ENCODE measurements at regions of chr18 and their contacts with region 1.

Region 1: GRCh38 chr18:58671111-58671631 is at the start of gene MALT1:
- DNase-seq: peak; percentile 84 to 98 (median 94)
- ATAC-seq: peak; percentile 82 to 90 (median 87)
- H3K4me3 ChIP-seq: peak within 1 kb of the TSS; percentile 74 to 90
- H3K4me3 Mint-ChIP-seq: peak within 1 kb of the TSS; percentile 93 to 95 (median 93)
- H3K27ac ChIP-seq: peak within 1 kb of the TSS; percentile 57
- H3K27ac Mint-ChIP-seq: peak within 1 kb of the TSS; percentile 94 to 95
- H3K4me1 ChIP-seq: peaks cover 29 to 42% of the 10 kb centered on the region in 2 experiments
- H3K4me1 Mint-ChIP-seq: peaks cover 51 to 61% (median 55%) of the 10 kb centered on the region in 3 donors
- H3K27me3 ChIP-seq: no peaks in the 10 kb centered on the region
- H3K27me3 Mint-ChIP-seq: no peaks in the 10 kb centered on the region
- total RNA-seq, gene MALT1: 54.5 to 83.2 (median 69.5) TPM

Region 2: DNA sequence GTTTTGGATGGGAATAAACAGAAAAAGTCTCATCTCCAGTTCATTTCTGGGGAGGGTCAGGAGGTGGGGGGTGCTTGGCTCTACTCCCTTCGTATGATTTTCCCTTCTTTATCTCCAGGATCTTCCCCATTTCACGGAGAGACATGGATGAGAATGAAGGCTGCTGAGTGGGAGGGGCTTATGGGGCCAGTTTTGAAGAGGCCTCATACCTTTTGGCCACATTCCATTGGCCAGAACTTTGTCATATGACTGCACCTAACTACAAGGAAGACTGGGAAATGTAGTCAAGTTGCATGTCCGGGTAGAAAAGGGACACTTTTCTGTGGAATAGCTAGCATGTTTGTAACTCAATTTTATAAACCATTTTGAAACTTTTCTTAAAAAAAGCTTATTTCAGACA is 509.5 kb before region 1 on chr18:
- CTCF ChIA-PET with region 1: no interaction called
- POLR2A ChIA-PET with region 1: no interaction called
- DNase-seq: no peak
- ATAC-seq: no peak
- H3K4me3 ChIP-seq: no peak overlapping the region
- H3K4me3 Mint-ChIP-seq: no peak overlapping the region
- H3K27ac ChIP-seq: no peak overlapping the region
- H3K27ac Mint-ChIP-seq: no peak overlapping the region
- H3K4me1 ChIP-seq: no peaks in the 10 kb centered on the region
- H3K4me1 Mint-ChIP-seq: no peaks in the 10 kb centered on the region
- H3K27me3 ChIP-seq: no peaks in the 10 kb centered on the region
- H3K27me3 Mint-ChIP-seq: peaks cover 3 to 16% of the 10 kb centered on the region in 2 donors

Region 3: DNA sequence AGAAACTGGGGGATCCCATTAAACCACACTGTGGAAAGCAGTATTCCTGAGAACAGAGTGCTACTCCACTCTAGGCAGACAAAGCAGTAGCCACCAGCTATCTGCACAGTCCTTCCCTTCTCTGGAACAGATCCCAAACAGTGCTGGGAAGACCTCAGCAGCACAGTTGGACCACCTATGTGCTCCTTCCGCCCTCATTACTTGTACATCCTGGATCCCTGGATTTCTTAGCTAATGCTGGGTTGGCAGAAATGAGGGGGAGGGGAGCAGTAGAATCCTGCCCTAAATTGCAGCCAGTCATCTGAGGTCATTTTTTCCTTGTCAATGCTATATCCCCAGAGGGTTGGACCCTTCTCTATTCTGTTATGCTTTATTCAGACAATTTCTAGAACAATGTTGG is 13.7 kb before region 1 on chr18:
- CTCF ChIA-PET with region 1: interaction called in 1 of 2 experiments, 16 read pairs
- POLR2A ChIA-PET with region 1: interaction called, 6 to 19 read pairs
- DNase-seq: no peak
- ATAC-seq: no peak
- H3K4me3 ChIP-seq: no peak overlapping the region
- H3K4me3 Mint-ChIP-seq: peak overlapping the region; percentile 60 to 71 (median 67)
- H3K27ac ChIP-seq: peak overlapping the region; percentile 75
- H3K27ac Mint-ChIP-seq: peak overlapping the region; percentile 88 to 94
- H3K4me1 ChIP-seq: peaks cover 22 to 35% of the 10 kb centered on the region in 2 experiments
- H3K4me1 Mint-ChIP-seq: peaks cover 72 to 85% (median 73%) of the 10 kb centered on the region in 3 donors
- H3K27me3 ChIP-seq: no peaks in the 10 kb centered on the region
- H3K27me3 Mint-ChIP-seq: no peaks in the 10 kb centered on the region

Region 4: DNA sequence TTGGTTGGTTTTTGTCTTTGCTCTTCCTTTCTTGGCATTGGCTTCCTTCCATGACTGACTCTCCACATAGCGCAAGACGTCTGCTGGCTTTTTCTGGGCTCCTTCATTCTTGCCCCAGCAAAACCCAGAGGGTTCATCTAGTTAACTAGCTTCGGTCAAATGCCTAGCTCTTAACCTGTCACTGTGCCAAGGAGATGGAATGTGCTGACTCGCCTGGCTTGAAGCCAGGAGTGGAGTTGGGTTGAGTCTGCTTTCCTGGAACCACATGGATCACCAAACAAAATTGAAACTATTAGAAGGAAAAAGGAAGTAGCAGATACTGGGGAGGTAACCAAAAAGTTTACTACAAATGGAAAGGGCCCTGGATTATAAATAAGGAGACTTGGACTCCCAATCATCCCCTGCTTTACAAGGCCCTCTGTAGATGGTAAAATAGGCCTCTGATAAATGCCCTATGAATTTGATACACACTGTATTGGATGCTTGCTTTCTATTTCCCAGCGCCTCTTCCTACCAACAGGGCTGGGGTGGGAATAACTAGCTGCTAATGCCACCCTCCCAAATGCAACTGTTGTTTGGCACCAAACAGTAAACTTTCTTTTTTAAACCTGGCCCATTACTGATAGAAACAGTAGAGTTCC is 11.4 kb after region 1 on chr18:
- CTCF ChIA-PET with region 1: interaction called, 3 to 20 read pairs
- POLR2A ChIA-PET with region 1: interaction called, 3 to 6 read pairs
- DNase-seq: no peak
- ATAC-seq: no peak
- H3K4me3 ChIP-seq: no peak overlapping the region
- H3K4me3 Mint-ChIP-seq: no peak overlapping the region
- H3K27ac ChIP-seq: no peak overlapping the region
- H3K27ac Mint-ChIP-seq: peak overlapping the region; percentile 85 to 89
- H3K4me1 ChIP-seq: peaks cover 14 to 31% of the 10 kb centered on the region in 2 experiments
- H3K4me1 Mint-ChIP-seq: peaks cover 67 to 84% (median 74%) of the 10 kb centered on the region in 3 donors
- H3K27me3 ChIP-seq: no peaks in the 10 kb centered on the region
- H3K27me3 Mint-ChIP-seq: no peaks in the 10 kb centered on the region

Region 5: DNA sequence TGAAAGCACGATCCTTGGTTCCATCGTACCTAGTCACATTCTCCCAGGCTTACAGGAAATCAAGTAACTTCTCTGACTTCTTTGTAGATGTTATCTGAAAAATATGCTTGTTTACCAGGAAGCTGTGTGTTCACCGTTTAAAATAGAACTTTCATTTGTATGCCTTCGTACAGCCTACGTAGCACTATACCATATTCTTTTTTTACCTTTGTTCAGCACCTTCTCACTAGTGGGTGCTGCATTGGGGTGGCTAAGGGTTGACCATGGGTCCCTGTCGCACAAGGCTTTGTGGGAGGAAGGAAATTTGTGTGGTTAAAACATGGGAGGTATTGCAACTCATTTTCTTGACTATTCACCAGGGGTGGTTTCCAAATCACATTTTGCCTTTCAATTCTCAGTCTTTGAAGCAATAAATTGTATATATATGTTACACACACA is 16.7 kb after region 1 on chr18:
- CTCF ChIA-PET with region 1: interaction called, 4 to 20 read pairs
- POLR2A ChIA-PET with region 1: interaction called, 6 to 7 read pairs
- DNase-seq: peak; percentile 28 to 91 (median 73)
- ATAC-seq: peak; percentile 89 to 96 (median 91)
- H3K4me3 ChIP-seq: peak overlapping the region in 1 of 2 donors; percentile 14
- H3K4me3 Mint-ChIP-seq: peak overlapping the region; percentile 43 to 79 (median 77)
- H3K27ac ChIP-seq: peak overlapping the region; percentile 84
- H3K27ac Mint-ChIP-seq: peak overlapping the region; percentile 99
- H3K4me1 ChIP-seq: peaks cover 53 to 54% of the 10 kb centered on the region in 2 experiments
- H3K4me1 Mint-ChIP-seq: peaks cover 71 to 86% (median 81%) of the 10 kb centered on the region in 3 donors
- H3K27me3 ChIP-seq: no peaks in the 10 kb centered on the region
- H3K27me3 Mint-ChIP-seq: no peaks in the 10 kb centered on the region

Region 6: GRCh38 chr18:58699551-58699950 is 28.4 kb after region 1 on chr18:
- CTCF ChIA-PET with region 1: interaction called in 1 of 2 experiments, 4 read pairs
- POLR2A ChIA-PET with region 1: interaction called in 1 of 2 experiments, 10 read pairs
- DNase-seq: peak in 1 of 35 experiments; percentile 44
- ATAC-seq: no peak
- H3K4me3 ChIP-seq: no peak overlapping the region
- H3K4me3 Mint-ChIP-seq: no peak overlapping the region
- H3K27ac ChIP-seq: no peak overlapping the region
- H3K27ac Mint-ChIP-seq: no peak overlapping the region
- H3K4me1 ChIP-seq: peaks cover 13 to 22% of the 10 kb centered on the region in 2 experiments
- H3K4me1 Mint-ChIP-seq: peaks cover 33 to 44% (median 43%) of the 10 kb centered on the region in 3 donors
- H3K27me3 ChIP-seq: no peaks in the 10 kb centered on the region
- H3K27me3 Mint-ChIP-seq: no peaks in the 10 kb centered on the region

Region 7: DNA sequence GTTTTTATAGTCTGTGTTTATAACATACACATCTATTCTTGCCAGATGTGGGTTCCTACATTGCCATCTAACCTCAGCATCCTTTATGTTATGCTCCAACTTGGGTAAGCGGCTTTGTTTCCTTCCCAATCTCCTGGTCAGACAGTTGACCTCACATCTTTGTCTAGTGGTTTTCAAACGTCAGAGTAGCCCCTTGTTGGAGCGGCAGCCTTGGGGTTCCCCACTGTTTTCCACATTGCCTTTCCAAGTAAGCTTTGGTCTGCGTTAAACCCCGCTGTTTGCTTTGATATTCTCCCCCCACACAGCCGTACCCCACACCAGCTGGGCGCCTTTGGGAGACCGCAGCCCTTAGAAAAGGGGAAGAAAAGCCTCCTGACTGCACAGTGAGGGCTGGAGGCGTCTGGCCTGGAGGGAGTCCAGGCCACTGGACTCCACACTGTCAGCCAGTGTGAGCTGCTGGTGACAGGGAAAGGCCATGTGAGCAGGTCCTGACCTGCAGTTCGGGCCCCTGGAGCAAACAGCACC is 83.4 kb after region 1 on chr18:
- CTCF ChIA-PET with region 1: no interaction called
- POLR2A ChIA-PET with region 1: interaction called, 3 to 10 read pairs
- DNase-seq: peak in 4 of 35 experiments; percentile 2 to 32 (median 16)
- ATAC-seq: peak in 3 of 4 experiments; percentile 27 to 57 (median 35)
- H3K4me3 ChIP-seq: no peak overlapping the region
- H3K4me3 Mint-ChIP-seq: peak overlapping the region in 1 of 3 donors; percentile 38
- H3K27ac ChIP-seq: peak overlapping the region; percentile 4
- H3K27ac Mint-ChIP-seq: peak overlapping the region; percentile 44 to 56
- H3K4me1 ChIP-seq: peaks cover 15 to 24% of the 10 kb centered on the region in 2 experiments
- H3K4me1 Mint-ChIP-seq: peaks cover 27 to 44% (median 40%) of the 10 kb centered on the region in 3 donors
- H3K27me3 ChIP-seq: no peaks in the 10 kb centered on the region
- H3K27me3 Mint-ChIP-seq: no peaks in the 10 kb centered on the region

Measured in T-cell (primary cell).